Heart right ventricle (tissue), 16 donors: ENCODE measurements at regions of chr6 and their contacts with region 1.

Region 1: GRCh38 chr6:111087106-111087835 is at the start of gene SLC16A10:
- DNase-seq: peak; percentile 73 to 74
- ATAC-seq: peak; percentile 92 to 97 (median 95)
- H3K4me3 ChIP-seq: peak within 1 kb of the TSS; percentile 29 to 68 (median 62)
- H3K27ac ChIP-seq: peak within 1 kb of the TSS in 8 of 10 donors; percentile 20 to 65 (median 54)
- H3K4me1 ChIP-seq: peaks cover 0 to 23% (median 13%) of the 10 kb centered on the region in 9 donors
- H3K27me3 ChIP-seq: peaks cover 0 to 65% (median 43%) of the 10 kb centered on the region in 7 donors
- CTCF ChIP-seq: no peak
- total RNA-seq, gene SLC16A10: 3.1 to 8.1 (median 7.2) TPM

Region 2: DNA sequence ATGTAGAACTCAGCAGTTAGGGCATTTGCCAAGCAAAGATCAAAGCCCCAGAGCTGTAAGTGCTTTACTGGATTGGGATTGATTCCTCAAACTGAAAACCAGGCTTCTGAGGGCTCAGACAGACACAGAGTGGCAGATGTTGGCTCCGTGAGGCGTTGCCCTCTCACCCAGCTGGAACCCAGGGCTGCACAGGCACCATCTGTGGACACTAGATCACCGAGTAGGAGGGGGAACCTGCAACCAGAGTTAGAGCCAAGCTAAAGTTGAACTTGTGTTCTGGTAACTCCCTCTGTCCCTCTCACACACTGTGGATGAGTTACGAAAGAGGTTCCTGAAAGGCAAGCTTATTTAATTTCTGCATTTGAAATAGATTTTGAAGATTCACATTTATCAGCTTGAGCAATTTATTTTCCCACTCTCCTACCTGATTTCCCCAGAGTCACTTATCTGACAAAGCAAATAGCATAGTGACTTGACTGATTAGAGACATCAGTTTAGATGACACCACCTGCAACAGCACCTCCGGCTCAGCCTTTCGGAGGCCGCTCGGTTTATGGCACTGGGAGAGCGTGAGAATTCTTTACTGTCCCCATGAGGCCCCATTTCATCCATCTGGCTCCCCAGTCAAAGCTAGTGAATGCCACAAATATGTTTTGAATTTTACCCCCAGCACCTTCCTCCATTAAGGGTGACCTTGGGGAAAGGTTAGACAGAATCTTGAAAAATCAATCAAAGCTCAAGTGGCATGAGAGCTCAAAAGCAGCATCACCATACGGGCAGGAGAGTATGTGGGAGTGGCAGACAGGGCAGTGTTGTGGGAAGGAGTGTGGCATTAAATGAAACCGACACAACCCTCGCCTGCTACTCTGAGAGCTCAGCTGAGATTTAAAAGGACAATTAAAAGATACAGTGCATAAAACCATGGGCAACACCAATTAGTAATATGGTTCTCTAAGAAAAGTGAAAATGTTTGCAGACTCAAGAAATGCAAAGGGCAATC is 57.0 kb before region 1 on chr6:
- intact Hi-C with region 1: loop called in 1 of 10 experiments (anchors 5 kb)
- DNase-seq: peak; percentile 36 to 49
- ATAC-seq: peak; percentile 76 to 94 (median 90)
- H3K4me3 ChIP-seq: no peak overlapping the region
- H3K27ac ChIP-seq: peak overlapping the region in 7 of 10 donors; percentile 34 to 69 (median 58)
- H3K4me1 ChIP-seq: peaks cover 0 to 27% (median 0%) of the 10 kb centered on the region in 9 donors
- H3K27me3 ChIP-seq: no peaks in the 10 kb centered on the region
- CTCF ChIP-seq: no peak

Region 3: DNA sequence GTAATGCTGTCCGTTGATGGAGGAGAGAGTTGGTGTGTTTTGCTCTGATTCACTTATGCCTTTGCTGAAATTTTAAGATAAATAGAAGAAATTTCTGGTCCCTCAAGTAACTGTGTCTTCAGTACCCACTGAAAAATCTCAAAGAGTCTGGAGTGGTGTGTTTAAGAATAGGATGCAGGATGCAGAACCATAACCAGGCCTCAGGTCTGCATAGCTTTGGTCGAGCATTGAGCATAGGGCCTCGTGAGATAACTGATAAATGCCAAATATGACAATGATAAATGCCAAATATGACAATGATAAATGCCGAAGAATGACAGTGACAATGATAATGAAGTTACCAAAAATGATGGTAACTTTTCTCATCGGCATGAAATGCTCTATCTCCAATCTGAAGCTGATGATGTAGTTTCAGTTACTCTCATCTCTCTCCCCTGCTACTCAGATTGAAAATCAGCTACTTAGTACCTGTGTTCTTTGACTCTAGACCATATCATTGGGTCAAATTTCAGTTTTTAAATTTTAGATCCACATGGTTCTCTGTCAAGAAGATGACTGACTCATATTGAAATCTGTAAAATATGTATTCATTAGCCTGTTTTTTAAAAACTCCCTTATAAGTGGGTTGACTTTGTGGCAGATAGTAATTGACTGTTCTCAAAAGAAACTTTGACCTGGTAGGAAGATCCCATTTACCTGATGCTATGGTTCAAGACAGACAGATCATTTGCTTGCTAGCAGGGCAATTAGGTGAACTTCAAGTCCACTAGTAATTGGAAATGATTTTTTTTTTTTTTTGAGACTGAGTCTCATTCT is 96.6 kb after region 1 on chr6:
- intact Hi-C with region 1: loop called in 1 of 10 experiments (anchors 10 kb)
- DNase-seq: no peak
- ATAC-seq: no peak
- H3K4me3 ChIP-seq: no peak overlapping the region
- H3K27ac ChIP-seq: no peak overlapping the region
- H3K4me1 ChIP-seq: peaks cover 0 to 6% (median 0%) of the 10 kb centered on the region in 9 donors
- H3K27me3 ChIP-seq: no peaks in the 10 kb centered on the region
- CTCF ChIP-seq: no peak